Breast epithelium (tissue), 4 donors: ENCODE measurements at regions of chr5 and their contacts with region 1.

Region 1: GRCh38 chr5:30592833-30593232 is 600.7 kb upstream of the CDH6 start:
- DNase-seq: no peak
- H3K4me3 ChIP-seq: no peak overlapping the region
- H3K27ac ChIP-seq: no peak overlapping the region
- H3K4me1 ChIP-seq: no peaks in the 10 kb centered on the region
- H3K27me3 ChIP-seq: no peaks in the 10 kb centered on the region
- CTCF ChIP-seq: no peak
- POLR2A ChIP-seq: no peak

Region 2: DNA sequence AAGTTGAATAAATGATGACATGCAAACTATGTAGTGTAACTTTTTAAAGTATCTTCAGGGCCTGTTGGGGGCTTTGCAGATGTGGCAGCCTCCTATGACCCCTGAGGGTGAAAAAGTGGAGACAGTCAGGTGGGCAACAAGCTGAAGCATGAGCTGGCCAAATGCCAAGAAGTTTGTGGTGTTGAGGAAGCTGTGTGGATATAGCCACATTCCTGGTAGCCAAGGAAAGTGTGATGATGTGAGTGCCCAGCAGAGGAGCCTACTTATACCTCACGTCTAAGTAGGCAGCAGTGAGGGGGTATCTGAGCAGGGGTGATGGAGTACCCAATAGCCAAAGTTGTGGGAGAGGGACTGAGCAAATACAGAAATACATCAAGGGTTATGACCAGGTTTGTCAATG is 20.6 kb before region 1 on chr5:
- intact Hi-C with region 1: loop called (anchors 2 kb)
- DNase-seq: no peak
- H3K4me3 ChIP-seq: no peak overlapping the region
- H3K27ac ChIP-seq: no peak overlapping the region
- H3K4me1 ChIP-seq: no peaks in the 10 kb centered on the region
- H3K27me3 ChIP-seq: no peaks in the 10 kb centered on the region
- CTCF ChIP-seq: no peak
- POLR2A ChIP-seq: no peak

Region 3: GRCh38 chr5:31598640-31599611 is 1006.1 kb after region 1 on chr5:
- intact Hi-C with region 1: loop called (anchors 10 kb)
- DNase-seq: no peak
- H3K4me3 ChIP-seq: no peak overlapping the region
- H3K27ac ChIP-seq: no peak overlapping the region
- H3K4me1 ChIP-seq: no peaks in the 10 kb centered on the region
- H3K27me3 ChIP-seq: no peaks in the 10 kb centered on the region
- CTCF ChIP-seq: no peak
- POLR2A ChIP-seq: no peak